ENCODE measurements at regions of chr3 and their contacts with region 1.

Region 1: DNA sequence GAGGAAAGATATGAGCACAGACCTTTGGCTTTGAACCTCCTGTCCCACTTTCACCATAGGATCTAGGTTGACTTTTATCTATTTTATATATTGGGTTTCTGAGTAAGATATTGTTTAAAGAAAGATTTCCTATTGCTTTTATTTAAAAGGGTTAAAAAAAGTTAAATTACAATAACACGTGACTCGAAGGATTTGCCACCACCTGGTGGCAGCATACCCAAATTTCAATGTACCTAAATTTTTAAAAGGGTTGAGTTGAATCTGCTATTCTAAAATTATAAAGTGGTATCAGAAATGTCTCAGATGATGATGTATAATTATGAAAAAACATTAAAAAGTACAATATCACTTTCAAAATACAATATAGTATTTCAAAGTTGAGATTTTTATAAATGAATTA is 368.4 kb downstream of the MECOM start:
- DNase-seq: peak; percentile 71
- H3K4me3 ChIP-seq: no peak overlapping the region
- H3K27ac ChIP-seq: no peak overlapping the region
- H3K4me1 ChIP-seq: peaks cover 7% of the 10 kb centered on the region
- H3K27me3 ChIP-seq: no peaks in the 10 kb centered on the region
- CTCF ChIP-seq: peak; percentile 29 to 32
- POLR2A ChIP-seq: no peak

Region 2: GRCh38 chr3:169218314-169218983 is 76.7 kb before region 1 on chr3:
- CTCF ChIA-PET with region 1: interaction called, 8 read pairs
- POLR2A ChIA-PET with region 1: no interaction called
- dilution Hi-C with region 1: no loop called
- intact Hi-C with region 1: loop called (anchors 1 kb)
- DNase-seq: peak; percentile 98
- H3K4me3 ChIP-seq: no peak overlapping the region
- H3K27ac ChIP-seq: peak overlapping the region; percentile 66
- H3K4me1 ChIP-seq: peaks cover 23% of the 10 kb centered on the region
- H3K27me3 ChIP-seq: no peaks in the 10 kb centered on the region
- CTCF ChIP-seq: peak; percentile 74 to 89
- POLR2A ChIP-seq: no peak

Region 3: GRCh38 chr3:169575373-169575772 is 280.2 kb after region 1 on chr3:
- CTCF ChIA-PET with region 1: no interaction called
- POLR2A ChIA-PET with region 1: no interaction called
- dilution Hi-C with region 1: no loop called
- intact Hi-C with region 1: loop called (anchors 10 kb)
- DNase-seq: peak; percentile 85
- H3K4me3 ChIP-seq: peak overlapping the region in 1 of 3 experiments; percentile 28
- H3K27ac ChIP-seq: peak overlapping the region; percentile 15
- H3K4me1 ChIP-seq: peaks cover 25% of the 10 kb centered on the region
- H3K27me3 ChIP-seq: no peaks in the 10 kb centered on the region
- CTCF ChIP-seq: no peak
- POLR2A ChIP-seq: peak; percentile 16

Region 4: GRCh38 chr3:169772897-169773828 is 478.0 kb after region 1 on chr3 and contains the start of gene MYNN:
- CTCF ChIA-PET with region 1: no interaction called
- POLR2A ChIA-PET with region 1: no interaction called
- dilution Hi-C with region 1: no loop called
- intact Hi-C with region 1: no loop called
- DNase-seq: peak; percentile 93
- H3K4me3 ChIP-seq: peak within 1 kb of the TSS; percentile 75 to 94 (median 77)
- H3K27ac ChIP-seq: peak within 1 kb of the TSS; percentile 94
- H3K4me1 ChIP-seq: peaks cover 13% of the 10 kb centered on the region
- H3K27me3 ChIP-seq: no peaks in the 10 kb centered on the region
- CTCF ChIP-seq: peak; percentile 4 to 24
- POLR2A ChIP-seq: peak; percentile 95
- total RNA-seq, gene MYNN: 11.7 and 12.7 TPM in 2 replicates

Measured in endothelial cell of umbilical vein (primary cell).